Sigmoid colon (tissue), 7 donors: ENCODE measurements at regions of chr3 and their contacts with region 1.

Region 1: DNA sequence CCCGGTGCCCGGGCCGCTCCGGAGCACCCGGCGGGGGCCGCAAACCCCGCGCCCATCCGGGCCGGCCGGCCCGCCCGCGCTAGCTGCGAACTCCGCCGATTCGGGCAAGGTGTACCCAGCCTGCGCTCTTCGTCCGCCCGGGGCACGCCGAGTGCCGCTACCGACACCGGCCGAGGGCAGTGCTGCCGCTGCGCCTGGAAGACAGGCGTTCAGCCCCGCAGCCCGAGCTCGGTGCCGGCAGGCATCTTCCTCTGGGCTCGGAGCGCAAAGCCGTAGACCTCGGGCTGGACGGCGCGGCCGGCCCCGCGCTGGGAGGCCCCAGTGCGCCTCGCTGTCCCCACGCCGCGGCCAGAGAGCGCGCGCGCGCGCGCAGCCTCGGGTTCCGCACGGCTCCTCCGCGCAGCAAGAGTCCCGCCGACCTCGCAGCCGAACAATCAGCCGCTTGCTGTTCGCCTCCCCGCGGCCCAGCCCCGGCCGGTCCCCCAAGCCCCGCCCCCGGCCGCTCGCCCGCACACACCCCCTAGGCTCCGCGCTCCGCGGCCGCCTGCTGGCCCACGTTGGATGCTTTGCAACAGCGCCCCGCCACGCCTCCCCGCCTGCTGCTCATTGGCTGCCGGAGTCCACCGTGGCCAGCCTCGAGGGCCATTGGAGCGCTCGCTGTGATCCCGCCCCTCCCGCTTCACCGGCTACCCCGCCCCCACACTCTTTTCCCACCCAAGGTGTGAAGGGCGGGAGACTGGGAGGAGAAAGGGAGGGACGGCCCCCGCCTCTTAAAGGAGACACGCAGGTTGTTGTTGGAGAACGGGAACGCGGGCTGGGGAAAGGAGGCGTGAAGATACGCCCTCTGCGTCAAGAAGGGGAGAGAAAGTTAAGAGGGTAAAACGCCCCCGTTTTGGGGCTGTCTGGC is at the start of gene LRIG1:
- DNase-seq: peak; percentile 100
- H3K4me3 ChIP-seq: peak within 1 kb of the TSS; percentile 82 to 99 (median 87)
- H3K27ac ChIP-seq: peak within 1 kb of the TSS; percentile 90 to 97 (median 94)
- H3K4me1 ChIP-seq: peaks cover 0 to 46% (median 40%) of the 10 kb centered on the region in 4 donors
- H3K27me3 ChIP-seq: no peaks in the 10 kb centered on the region
- CTCF ChIP-seq: peak; percentile 16 to 49 (median 32)
- EP300 ChIP-seq: peak in 1 of 4 donors; percentile 36
- POLR2A ChIP-seq: no peak
- total RNA-seq, gene LRIG1: 150 to 226 (median 210) TPM

Region 2: GRCh38 chr3:66276705-66277274 is 224.0 kb before region 1 on chr3:
- intact Hi-C with region 1: loop called (anchors 2 kb)
- DNase-seq: peak; percentile 75
- H3K4me3 ChIP-seq: no peak overlapping the region
- H3K27ac ChIP-seq: peak overlapping the region in 3 of 4 donors; percentile 32 to 59 (median 58)
- H3K4me1 ChIP-seq: peaks cover 0 to 32% (median 10%) of the 10 kb centered on the region in 4 donors
- H3K27me3 ChIP-seq: no peaks in the 10 kb centered on the region
- CTCF ChIP-seq: peak; percentile 55 to 61 (median 58)
- EP300 ChIP-seq: no peak
- POLR2A ChIP-seq: no peak

Region 3: GRCh38 chr3:66450390-66451022 is 50.3 kb before region 1 on chr3:
- intact Hi-C with region 1: loop called (anchors 5 kb)
- DNase-seq: peak; percentile 90
- H3K4me3 ChIP-seq: peak overlapping the region in 2 of 4 donors; percentile 12 to 27
- H3K27ac ChIP-seq: peak overlapping the region; percentile 79 to 95 (median 85)
- H3K4me1 ChIP-seq: peaks cover 0 to 100% (median 93%) of the 10 kb centered on the region in 4 donors
- H3K27me3 ChIP-seq: no peaks in the 10 kb centered on the region
- CTCF ChIP-seq: no peak
- EP300 ChIP-seq: no peak
- POLR2A ChIP-seq: no peak

Region 4: GRCh38 chr3:66615643-66616301 is 114.9 kb after region 1 on chr3:
- intact Hi-C with region 1: loop called (anchors 5 kb)
- DNase-seq: no peak
- H3K4me3 ChIP-seq: no peak overlapping the region
- H3K27ac ChIP-seq: peak overlapping the region in 3 of 4 donors; percentile 53 to 74 (median 72)
- H3K4me1 ChIP-seq: peaks cover 0 to 36% (median 30%) of the 10 kb centered on the region in 4 donors
- H3K27me3 ChIP-seq: no peaks in the 10 kb centered on the region
- CTCF ChIP-seq: no peak
- EP300 ChIP-seq: no peak
- POLR2A ChIP-seq: no peak

Region 5: DNA sequence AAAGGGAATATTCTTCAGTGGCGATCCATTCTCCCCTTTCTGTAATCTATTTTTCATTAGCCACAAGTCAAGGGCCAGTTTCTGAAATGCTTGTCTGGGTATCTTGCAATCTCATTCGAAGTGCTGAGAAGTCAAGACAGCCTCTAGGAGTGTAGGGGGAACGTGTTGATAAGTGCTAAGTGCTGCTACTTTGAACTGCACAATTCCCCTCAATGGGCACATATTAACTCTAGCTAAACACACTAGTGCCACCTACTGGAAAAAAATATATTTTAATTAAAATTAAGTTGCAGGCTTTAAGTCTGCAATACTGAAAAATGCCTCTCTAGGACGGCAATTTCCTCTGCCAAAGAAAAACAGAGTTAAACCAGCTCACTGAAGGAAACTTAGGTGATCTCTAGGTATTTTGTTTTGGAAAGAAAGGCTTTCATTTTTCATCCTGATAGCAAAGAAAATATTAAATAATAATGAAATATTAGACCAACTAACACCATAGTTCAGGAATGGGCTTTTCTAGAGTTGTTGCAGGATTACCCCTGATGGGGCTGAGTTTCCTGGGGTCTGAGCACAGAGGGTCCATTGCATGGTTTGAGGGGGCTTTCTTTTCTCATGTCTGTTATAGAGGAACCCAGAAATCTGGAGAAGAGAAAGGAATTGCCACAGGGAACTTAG is 315.4 kb after region 1 on chr3:
- intact Hi-C with region 1: loop called (anchors 2 kb)
- DNase-seq: no peak
- H3K4me3 ChIP-seq: no peak overlapping the region
- H3K27ac ChIP-seq: peak overlapping the region in 2 of 4 donors; percentile 15 to 29
- H3K4me1 ChIP-seq: peaks cover 0 to 36% (median 19%) of the 10 kb centered on the region in 4 donors
- H3K27me3 ChIP-seq: no peaks in the 10 kb centered on the region
- CTCF ChIP-seq: peak; percentile 41 to 61 (median 57)
- EP300 ChIP-seq: no peak
- POLR2A ChIP-seq: no peak